ENCODE measurements at regions of chr1 and their contacts with region 1.

Region 1: GRCh38 chr1:42952303-42953001 is 6.2 kb downstream of the SLC2A1 start:
- DNase-seq: peak; percentile 89
- ATAC-seq: peak; percentile 82
- H3K4me3 ChIP-seq: peak overlapping the region in 4 of 5 experiments; percentile 19 to 56 (median 30)
- H3K4me3 Mint-ChIP-seq: peak overlapping the region; percentile 93
- H3K27ac ChIP-seq: peak overlapping the region; percentile 94 to 95
- H3K27ac Mint-ChIP-seq: peak overlapping the region; percentile 99
- H3K4me1 ChIP-seq: peaks cover 91 to 99% of the 10 kb centered on the region in 2 donors
- H3K4me1 Mint-ChIP-seq: peaks cover 91% of the 10 kb centered on the region
- H3K27me3 ChIP-seq: no peaks in the 10 kb centered on the region
- H3K27me3 Mint-ChIP-seq: no peaks in the 10 kb centered on the region
- CTCF ChIP-seq: no peak

Region 2: DNA sequence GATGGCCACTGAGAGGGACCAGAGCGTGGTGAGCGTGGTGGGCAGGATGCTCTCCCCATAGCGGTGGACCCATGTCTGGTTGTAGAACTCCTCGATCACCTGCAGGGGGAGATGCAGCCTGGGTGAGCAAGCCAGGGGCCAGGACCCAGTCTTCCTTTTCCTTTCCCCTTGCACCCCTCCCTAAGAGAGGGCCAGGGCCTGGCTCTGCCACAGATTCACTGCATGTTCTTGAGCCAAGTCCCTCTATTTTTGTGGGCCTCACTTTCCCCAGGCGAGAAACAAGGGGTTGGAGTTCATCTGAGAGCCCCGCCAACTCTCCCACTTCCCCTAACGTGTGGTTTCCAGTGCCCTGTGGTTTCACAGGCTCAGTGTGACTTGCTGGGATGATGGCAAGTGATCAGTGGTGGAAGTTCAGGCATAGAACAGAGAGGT is 21.3 kb before region 1 on chr1:
- CTCF ChIA-PET with region 1: interaction called, 121 read pairs
- POLR2A ChIA-PET with region 1: interaction called, 209 read pairs
- intact Hi-C with region 1: loop called (anchors 1 kb)
- DNase-seq: peak; percentile 80
- ATAC-seq: no peak
- H3K4me3 ChIP-seq: peak overlapping the region; percentile 2 to 42 (median 26)
- H3K4me3 Mint-ChIP-seq: peak overlapping the region; percentile 86
- H3K27ac ChIP-seq: peak overlapping the region; percentile 84 to 97
- H3K27ac Mint-ChIP-seq: peak overlapping the region; percentile 97
- H3K4me1 ChIP-seq: peaks cover 54 to 66% of the 10 kb centered on the region in 2 donors
- H3K4me1 Mint-ChIP-seq: peaks cover 80% of the 10 kb centered on the region
- H3K27me3 ChIP-seq: no peaks in the 10 kb centered on the region
- H3K27me3 Mint-ChIP-seq: no peaks in the 10 kb centered on the region
- CTCF ChIP-seq: peak; percentile 69

Region 3: GRCh38 chr1:42936309-42937078 is 16.0 kb before region 1 on chr1:
- CTCF ChIA-PET with region 1: interaction called, 121 read pairs
- POLR2A ChIA-PET with region 1: interaction called, 179 read pairs
- intact Hi-C with region 1: loop called (anchors 1 kb)
- DNase-seq: no peak
- ATAC-seq: no peak
- H3K4me3 ChIP-seq: no peak overlapping the region
- H3K4me3 Mint-ChIP-seq: peak overlapping the region; percentile 61
- H3K27ac ChIP-seq: peak overlapping the region; percentile 87 to 97
- H3K27ac Mint-ChIP-seq: peak overlapping the region; percentile 97
- H3K4me1 ChIP-seq: peaks cover 96 to 100% of the 10 kb centered on the region in 2 donors
- H3K4me1 Mint-ChIP-seq: peaks cover 98% of the 10 kb centered on the region
- H3K27me3 ChIP-seq: no peaks in the 10 kb centered on the region
- H3K27me3 Mint-ChIP-seq: no peaks in the 10 kb centered on the region
- CTCF ChIP-seq: no peak

Region 4: GRCh38 chr1:42941640-42942330 is 10.7 kb before region 1 on chr1:
- CTCF ChIA-PET with region 1: interaction called, 121 read pairs
- POLR2A ChIA-PET with region 1: interaction called, 179 read pairs
- intact Hi-C with region 1: loop called (anchors 1 kb)
- DNase-seq: peak; percentile 13
- ATAC-seq: no peak
- H3K4me3 ChIP-seq: no peak overlapping the region
- H3K4me3 Mint-ChIP-seq: no peak overlapping the region
- H3K27ac ChIP-seq: peak overlapping the region; percentile 66 to 76
- H3K27ac Mint-ChIP-seq: peak overlapping the region; percentile 92
- H3K4me1 ChIP-seq: peaks cover 98 to 100% of the 10 kb centered on the region in 2 donors
- H3K4me1 Mint-ChIP-seq: peaks cover 96% of the 10 kb centered on the region
- H3K27me3 ChIP-seq: no peaks in the 10 kb centered on the region
- H3K27me3 Mint-ChIP-seq: no peaks in the 10 kb centered on the region
- CTCF ChIP-seq: no peak

Measured in B cell (primary cell).